CD8-positive, alpha-beta T cell (primary cell): ENCODE measurements at regions of chr15 and their contacts with region 1.

Region 1: GRCh38 chr15:42920519-42921227 is at the start of gene TTBK2:
- DNase-seq: peak; percentile 94 to 99 (median 97)
- ATAC-seq: peak; percentile 94
- H3K4me3 ChIP-seq: peak within 1 kb of the TSS; percentile 69 to 70
- H3K4me3 Mint-ChIP-seq: peak within 1 kb of the TSS; percentile 98
- H3K27ac ChIP-seq: peak within 1 kb of the TSS; percentile 39 to 64
- H3K27ac Mint-ChIP-seq: peak within 1 kb of the TSS; percentile 96
- H3K4me1 ChIP-seq: peaks cover 9% of the 10 kb centered on the region
- H3K4me1 Mint-ChIP-seq: peaks cover 31% of the 10 kb centered on the region
- H3K27me3 ChIP-seq: no peaks in the 10 kb centered on the region
- H3K27me3 Mint-ChIP-seq: no peaks in the 10 kb centered on the region
- CTCF ChIP-seq: no peak
- total RNA-seq, gene TTBK2: 17.7 to 19.3 TPM

Region 2: GRCh38 chr15:42207674-42208579 is 712.7 kb before region 1 on chr15 and contains the start of gene VPS39:
- CTCF ChIA-PET with region 1: no interaction called
- POLR2A ChIA-PET with region 1: no interaction called
- intact Hi-C with region 1: loop called (anchors 2 to 10 kb)
- DNase-seq: peak; percentile 65 to 90 (median 85)
- ATAC-seq: peak; percentile 98
- H3K4me3 ChIP-seq: peak within 1 kb of the TSS; percentile 73 to 96
- H3K4me3 Mint-ChIP-seq: peak within 1 kb of the TSS; percentile 97
- H3K27ac ChIP-seq: peak within 1 kb of the TSS; percentile 83 to 84
- H3K27ac Mint-ChIP-seq: peak within 1 kb of the TSS; percentile 95
- H3K4me1 ChIP-seq: peaks cover 23% of the 10 kb centered on the region
- H3K4me1 Mint-ChIP-seq: peaks cover 40% of the 10 kb centered on the region
- H3K27me3 ChIP-seq: no peaks in the 10 kb centered on the region
- H3K27me3 Mint-ChIP-seq: no peaks in the 10 kb centered on the region
- CTCF ChIP-seq: no peak
- total RNA-seq, gene VPS39: 81.5 to 82.9 TPM

Region 3: DNA sequence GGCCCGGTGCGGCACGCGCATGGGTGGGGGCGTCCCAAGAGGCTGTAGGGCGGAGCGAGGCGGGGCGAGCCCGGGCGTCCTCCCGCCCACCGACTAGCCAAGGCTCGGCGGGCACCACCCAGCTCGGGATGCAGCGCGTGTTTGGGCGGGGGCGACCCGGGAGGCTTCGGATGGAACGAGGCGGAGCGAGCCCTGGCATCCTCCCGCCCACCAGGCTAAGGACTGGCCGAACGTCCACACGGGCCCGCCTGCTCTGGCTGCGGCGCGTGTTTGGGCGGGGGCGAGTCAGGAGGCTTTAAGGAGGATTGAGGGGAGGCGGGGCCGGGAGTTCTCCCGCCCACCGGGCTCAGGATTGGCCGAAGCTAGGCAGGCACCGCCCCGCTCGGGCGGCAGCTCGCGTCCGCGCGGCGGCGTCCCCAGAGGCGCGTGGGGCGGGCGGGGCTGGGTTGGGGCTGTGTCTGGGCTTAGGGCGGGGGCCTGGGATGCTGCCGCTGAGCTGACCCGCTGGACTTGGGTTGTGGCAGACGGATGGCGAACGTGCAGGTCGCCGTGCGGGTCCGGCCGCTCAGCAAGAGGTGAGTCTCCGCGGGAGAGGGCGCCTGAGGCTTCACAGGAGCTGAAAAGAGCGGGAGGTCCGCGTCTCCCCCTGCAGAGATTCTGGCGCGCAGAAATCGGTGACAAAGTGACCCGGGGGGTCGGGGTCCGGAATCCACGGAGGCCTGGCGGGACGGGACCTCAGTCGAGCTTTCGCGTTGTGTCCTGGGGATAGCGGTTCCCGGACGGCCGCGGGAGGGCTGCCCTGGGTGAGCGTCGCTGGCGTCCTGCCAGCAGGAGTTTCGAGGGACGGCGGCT is 345.3 kb before region 1 on chr15 and contains the start of gene STARD9:
- CTCF ChIA-PET with region 1: no interaction called
- POLR2A ChIA-PET with region 1: no interaction called
- intact Hi-C with region 1: loop called (anchors 1 to 5 kb)
- DNase-seq: peak; percentile 89 to 97 (median 93)
- ATAC-seq: peak; percentile 91
- H3K4me3 ChIP-seq: peak within 1 kb of the TSS; percentile 87 to 89
- H3K4me3 Mint-ChIP-seq: peak within 1 kb of the TSS; percentile 93
- H3K27ac ChIP-seq: peak within 1 kb of the TSS; percentile 41 to 57
- H3K27ac Mint-ChIP-seq: peak within 1 kb of the TSS; percentile 74
- H3K4me1 ChIP-seq: peaks cover 16% of the 10 kb centered on the region
- H3K4me1 Mint-ChIP-seq: peaks cover 27% of the 10 kb centered on the region
- H3K27me3 ChIP-seq: no peaks in the 10 kb centered on the region
- H3K27me3 Mint-ChIP-seq: no peaks in the 10 kb centered on the region
- CTCF ChIP-seq: no peak
- total RNA-seq, gene STARD9: 8.5 to 9.0 TPM

Region 4: DNA sequence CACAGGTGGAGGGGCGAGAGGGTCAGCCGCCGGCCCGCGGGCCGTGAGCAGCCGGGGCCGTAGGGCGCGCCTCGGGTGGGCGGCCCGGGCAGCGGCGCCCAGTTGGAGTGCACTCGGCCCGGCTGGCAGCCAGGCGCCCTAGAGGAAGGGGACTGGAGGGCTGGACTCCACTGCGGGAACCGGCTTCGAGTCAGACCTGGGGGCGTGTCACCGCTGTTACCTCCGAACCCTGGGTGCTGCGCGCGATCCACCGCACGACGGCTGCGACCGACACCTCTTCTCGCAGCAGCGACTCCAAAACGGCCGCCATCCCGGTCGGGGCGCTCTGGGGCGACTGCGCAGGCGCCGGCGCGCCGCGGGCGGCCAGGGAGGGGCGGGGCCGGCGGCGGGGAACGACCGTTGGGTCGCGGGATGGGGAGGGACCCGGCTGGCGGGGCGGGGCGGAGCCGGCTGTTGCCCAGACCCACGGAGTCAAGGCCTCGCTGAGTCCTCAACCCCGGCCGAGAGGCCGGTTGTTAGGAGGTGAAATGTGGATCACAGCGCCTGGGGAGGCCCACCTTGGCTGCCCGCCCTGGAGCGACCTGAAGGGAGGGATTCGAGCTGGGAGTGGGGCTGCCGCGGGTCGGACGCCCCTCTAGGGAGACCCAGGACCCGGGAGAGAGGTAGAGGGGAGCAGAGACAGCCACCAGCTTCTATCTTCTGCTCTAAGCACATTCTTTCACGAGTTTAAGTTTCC is 183.7 kb before region 1 on chr15 and contains the start of gene CDAN1:
- CTCF ChIA-PET with region 1: interaction called, 16 read pairs
- POLR2A ChIA-PET with region 1: interaction called, 3 read pairs
- intact Hi-C with region 1: loop called (anchors 1 kb)
- DNase-seq: peak; percentile 88 to 97 (median 93)
- ATAC-seq: peak; percentile 93
- H3K4me3 ChIP-seq: peak within 1 kb of the TSS; percentile 62 to 78
- H3K4me3 Mint-ChIP-seq: peak within 1 kb of the TSS; percentile 80
- H3K27ac ChIP-seq: peak within 1 kb of the TSS; percentile 72 to 80
- H3K27ac Mint-ChIP-seq: peak within 1 kb of the TSS; percentile 78
- H3K4me1 ChIP-seq: peaks cover 14% of the 10 kb centered on the region
- H3K4me1 Mint-ChIP-seq: peaks cover 22% of the 10 kb centered on the region
- H3K27me3 ChIP-seq: no peaks in the 10 kb centered on the region
- H3K27me3 Mint-ChIP-seq: no peaks in the 10 kb centered on the region
- CTCF ChIP-seq: no peak
- total RNA-seq, gene CDAN1: 23.9 to 24.0 TPM

Region 5: GRCh38 chr15:42858540-42858939 is 62.1 kb before region 1 on chr15:
- CTCF ChIA-PET with region 1: no interaction called
- POLR2A ChIA-PET with region 1: interaction called, 3 read pairs
- intact Hi-C with region 1: loop called in 1 of 2 experiments (anchors 10 kb)
- DNase-seq: no peak
- ATAC-seq: no peak
- H3K4me3 ChIP-seq: no peak overlapping the region
- H3K4me3 Mint-ChIP-seq: no peak overlapping the region
- H3K27ac ChIP-seq: no peak overlapping the region
- H3K27ac Mint-ChIP-seq: no peak overlapping the region
- H3K4me1 ChIP-seq: no peaks in the 10 kb centered on the region
- H3K4me1 Mint-ChIP-seq: peaks cover 9% of the 10 kb centered on the region
- H3K27me3 ChIP-seq: no peaks in the 10 kb centered on the region
- H3K27me3 Mint-ChIP-seq: no peaks in the 10 kb centered on the region
- CTCF ChIP-seq: no peak

Region 6: DNA sequence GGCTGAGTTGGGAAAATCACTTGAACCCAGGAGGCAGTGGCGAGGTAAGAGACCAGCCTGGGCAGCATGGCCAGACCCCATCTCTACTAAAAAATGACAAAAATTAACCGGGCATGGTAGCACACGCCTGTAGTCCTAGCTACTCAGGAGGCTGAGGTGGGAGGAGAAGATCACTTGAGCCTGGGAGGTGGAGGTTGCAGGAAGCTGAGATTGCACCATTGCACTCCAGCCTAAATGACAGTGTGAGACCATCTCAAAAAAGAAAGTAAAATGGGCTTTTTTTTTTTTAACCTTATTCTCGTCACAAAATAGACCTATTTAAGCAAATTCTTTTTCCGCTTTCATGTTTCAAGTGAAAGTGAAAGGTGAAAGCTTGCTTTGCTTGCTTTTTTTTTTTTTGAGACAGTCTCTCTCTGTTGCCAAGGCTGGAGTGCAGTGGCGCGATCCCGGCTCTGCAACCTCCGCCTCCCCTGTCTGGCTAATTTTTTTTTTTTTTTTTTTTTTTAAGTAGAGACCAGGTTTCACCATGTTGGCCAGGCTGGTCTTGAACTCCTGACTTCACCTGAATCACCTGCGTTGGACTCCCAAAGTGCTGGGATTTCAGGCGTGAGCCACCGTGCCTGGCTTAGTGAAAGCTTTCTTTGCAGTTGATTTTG is 829.1 kb after region 1 on chr15:
- CTCF ChIA-PET with region 1: no interaction called
- POLR2A ChIA-PET with region 1: no interaction called
- intact Hi-C with region 1: loop called in 1 of 2 experiments (anchors 5 kb)
- DNase-seq: peak in 5 of 9 experiments; percentile 21 to 91 (median 59)
- ATAC-seq: peak; percentile 53
- H3K4me3 ChIP-seq: peak overlapping the region; percentile 52 to 53
- H3K4me3 Mint-ChIP-seq: peak overlapping the region; percentile 78
- H3K27ac ChIP-seq: peak overlapping the region; percentile 58 to 81
- H3K27ac Mint-ChIP-seq: peak overlapping the region; percentile 92
- H3K4me1 ChIP-seq: peaks cover 60% of the 10 kb centered on the region
- H3K4me1 Mint-ChIP-seq: peaks cover 62% of the 10 kb centered on the region
- H3K27me3 ChIP-seq: no peaks in the 10 kb centered on the region
- H3K27me3 Mint-ChIP-seq: no peaks in the 10 kb centered on the region
- CTCF ChIP-seq: no peak